Mammary epithelial cell (primary cell): ENCODE measurements at regions of chr17 and their contacts with region 1.

Region 1: GRCh38 chr17:21214015-21214776 is at the start of gene TMEM11:
- DNase-seq: peak; percentile 95
- H3K4me3 ChIP-seq: peak within 1 kb of the TSS; percentile 78 to 96 (median 93)
- H3K27ac ChIP-seq: peak within 1 kb of the TSS; percentile 86
- H3K4me1 ChIP-seq: peaks cover 33% of the 10 kb centered on the region
- H3K27me3 ChIP-seq: no peaks in the 10 kb centered on the region
- CTCF ChIP-seq: peak in 1 of 2 donors; percentile 18
- total RNA-seq, gene TMEM11: 17.2 to 35.7 TPM

Region 2: GRCh38 chr17:21126645-21127510 is 87.3 kb before region 1 on chr17 and contains the start of gene DHRS7B:
- CTCF ChIA-PET with region 1: no interaction called
- dilution Hi-C with region 1: loop called (anchors 5 kb)
- in situ Hi-C with region 1: no loop called
- intact Hi-C with region 1: loop called (anchors 2 kb)
- DNase-seq: peak; percentile 95
- H3K4me3 ChIP-seq: peak within 1 kb of the TSS; percentile 63 to 97 (median 71)
- H3K27ac ChIP-seq: peak within 1 kb of the TSS; percentile 71
- H3K4me1 ChIP-seq: peaks cover 12% of the 10 kb centered on the region
- H3K27me3 ChIP-seq: no peaks in the 10 kb centered on the region
- CTCF ChIP-seq: peak in 1 of 2 donors; percentile 14
- total RNA-seq, gene DHRS7B: 27.3 to 29.5 TPM

Region 3: GRCh38 chr17:21132428-21132827 is 81.8 kb before region 1 on chr17:
- CTCF ChIA-PET with region 1: no interaction called
- dilution Hi-C with region 1: loop called (anchors 5 kb)
- in situ Hi-C with region 1: no loop called
- intact Hi-C with region 1: loop called (anchors 2 kb)
- DNase-seq: no peak
- H3K4me3 ChIP-seq: no peak overlapping the region
- H3K27ac ChIP-seq: no peak overlapping the region
- H3K4me1 ChIP-seq: peaks cover 9% of the 10 kb centered on the region
- H3K27me3 ChIP-seq: no peaks in the 10 kb centered on the region
- CTCF ChIP-seq: no peak

Region 4: GRCh38 chr17:21171309-21171922 is 42.8 kb before region 1 on chr17:
- CTCF ChIA-PET with region 1: no interaction called
- dilution Hi-C with region 1: no loop called
- in situ Hi-C with region 1: no loop called
- intact Hi-C with region 1: no loop called
- DNase-seq: no peak
- H3K4me3 ChIP-seq: no peak overlapping the region
- H3K27ac ChIP-seq: no peak overlapping the region
- H3K4me1 ChIP-seq: peaks cover 6% of the 10 kb centered on the region
- H3K27me3 ChIP-seq: no peaks in the 10 kb centered on the region
- CTCF ChIP-seq: no peak

Region 5: DNA sequence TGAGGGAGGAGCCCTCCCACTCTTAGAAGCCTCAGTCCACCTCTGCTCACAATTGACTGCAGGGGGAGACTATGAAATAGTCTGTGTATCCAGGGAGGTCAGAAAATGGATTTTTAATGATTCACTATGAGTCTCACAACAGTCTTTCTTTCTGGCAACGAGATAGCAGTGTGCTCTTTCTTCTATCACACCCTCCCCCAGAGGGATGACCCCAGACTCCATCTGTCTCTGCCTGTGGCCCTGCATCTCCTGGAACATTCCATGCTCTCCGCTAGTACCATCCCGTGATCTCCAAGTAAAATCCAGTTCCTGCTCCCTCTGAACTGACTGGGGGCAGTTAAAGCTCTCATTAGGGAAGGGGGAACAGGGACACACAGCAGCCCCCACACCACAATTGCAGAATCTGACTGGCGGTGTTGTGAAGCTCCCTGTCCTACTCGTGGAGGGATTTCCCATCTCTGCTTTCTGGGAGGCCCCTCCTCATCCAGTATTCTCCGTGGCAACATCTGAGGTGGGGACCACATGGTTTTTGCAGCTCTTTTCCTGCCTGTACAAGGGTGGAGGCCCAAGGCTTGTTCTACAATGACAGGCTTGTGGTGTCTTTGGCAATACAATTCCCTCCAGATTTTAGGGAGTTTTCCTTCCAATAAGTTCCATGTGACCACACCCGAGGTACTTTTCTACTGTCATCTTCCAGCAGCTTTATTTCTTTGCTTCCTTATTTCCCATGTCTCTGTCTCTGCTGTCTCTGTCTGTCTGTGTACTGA is 19.6 kb after region 1 on chr17:
- CTCF ChIA-PET with region 1: no interaction called
- dilution Hi-C with region 1: no loop called
- in situ Hi-C with region 1: no loop called
- intact Hi-C with region 1: no loop called
- DNase-seq: no peak
- H3K4me3 ChIP-seq: no peak overlapping the region
- H3K27ac ChIP-seq: no peak overlapping the region
- H3K4me1 ChIP-seq: no peaks in the 10 kb centered on the region
- H3K27me3 ChIP-seq: no peaks in the 10 kb centered on the region
- CTCF ChIP-seq: no peak

Region 6: DNA sequence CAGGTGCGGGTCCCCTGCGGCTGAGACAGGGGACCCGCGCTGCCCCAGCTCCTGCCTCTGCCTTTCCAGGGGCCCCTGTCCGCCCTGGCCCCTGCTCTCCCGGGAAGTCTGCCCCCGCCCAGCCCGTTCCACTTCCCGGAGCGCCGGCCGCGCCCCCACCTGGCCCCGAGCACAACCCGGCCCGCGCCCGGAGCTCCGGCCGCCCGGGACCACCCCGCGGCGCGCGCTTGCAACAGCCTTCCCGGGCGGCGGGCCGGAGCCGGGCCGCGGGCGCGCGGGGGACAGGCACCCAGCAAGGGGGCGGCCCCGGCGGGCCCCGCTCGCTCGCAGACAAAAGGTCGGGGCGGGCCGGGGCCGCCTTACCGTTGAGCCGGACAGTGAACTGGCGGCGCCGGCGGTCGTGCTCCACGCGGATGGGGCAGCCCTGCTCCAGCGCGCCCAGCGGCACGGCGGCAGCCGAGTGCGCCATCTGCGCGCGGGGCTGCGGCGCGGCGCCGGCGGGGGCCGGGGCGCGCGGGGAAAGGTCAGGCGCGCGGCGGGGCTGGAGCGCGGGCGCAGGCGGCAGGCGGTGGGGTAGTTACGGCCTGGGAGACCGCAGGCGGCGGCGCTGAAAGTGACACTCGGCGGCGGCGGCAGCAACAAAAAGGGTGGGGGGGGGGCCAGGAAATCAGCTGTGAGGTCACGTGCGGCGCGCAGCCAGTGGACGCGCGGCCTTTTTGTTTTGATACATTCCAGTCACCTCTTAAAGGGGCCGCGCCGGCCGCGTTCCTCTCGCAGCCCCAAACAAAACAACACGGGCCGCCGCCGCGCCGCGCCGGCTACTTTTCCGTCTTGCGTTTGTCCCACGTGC is 38.8 kb after region 1 on chr17 and contains the start of gene NATD1:
- CTCF ChIA-PET with region 1: no interaction called
- dilution Hi-C with region 1: no loop called
- in situ Hi-C with region 1: no loop called
- intact Hi-C with region 1: loop called (anchors 1 kb)
- DNase-seq: peak; percentile 73
- H3K4me3 ChIP-seq: peak within 1 kb of the TSS; percentile 53 to 62 (median 56)
- H3K27ac ChIP-seq: peak within 1 kb of the TSS; percentile 30
- H3K4me1 ChIP-seq: peaks cover 26% of the 10 kb centered on the region
- H3K27me3 ChIP-seq: no peaks in the 10 kb centered on the region
- CTCF ChIP-seq: no peak
- total RNA-seq, gene NATD1: 6.1 to 10.8 TPM

Region 7: DNA sequence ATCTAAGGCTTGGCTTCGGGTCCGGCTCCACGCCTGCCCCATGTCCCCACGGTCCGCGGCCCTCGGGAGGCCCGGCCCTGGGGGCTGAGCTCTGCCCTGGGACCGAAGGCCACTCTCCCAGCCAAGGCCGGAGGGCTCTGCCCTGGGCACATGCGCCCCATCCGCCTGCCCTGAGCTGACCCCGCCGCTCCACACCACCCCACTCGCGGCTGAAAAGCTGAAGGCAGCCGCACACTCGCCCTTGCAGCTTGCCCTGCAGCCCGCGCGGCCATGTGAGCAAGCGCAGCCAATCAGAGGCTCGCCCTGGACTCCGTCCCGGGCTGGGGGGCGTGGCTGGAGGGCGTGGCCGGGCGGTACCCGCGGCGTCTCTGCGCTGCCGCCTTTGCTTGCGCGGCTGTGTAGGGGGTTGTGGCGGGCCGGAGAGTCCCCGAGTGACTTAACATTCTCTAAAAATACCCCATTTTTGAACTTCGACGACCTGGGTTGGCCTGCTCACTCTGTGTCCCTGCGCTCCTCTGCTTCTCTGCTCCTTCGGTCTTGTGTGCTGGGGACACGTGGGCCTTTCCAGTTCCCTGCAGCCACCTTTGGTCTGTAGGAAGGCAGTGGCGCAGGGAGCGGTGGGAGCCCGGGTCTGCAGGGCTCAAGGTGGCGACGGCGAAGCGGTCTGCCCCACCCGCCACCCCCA is 61.5 kb after region 1 on chr17:
- CTCF ChIA-PET with region 1: no interaction called
- dilution Hi-C with region 1: loop called (anchors 5 kb)
- in situ Hi-C with region 1: no loop called
- intact Hi-C with region 1: no loop called
- DNase-seq: peak; percentile 70
- H3K4me3 ChIP-seq: peak overlapping the region; percentile 58 to 66 (median 62)
- H3K27ac ChIP-seq: no peak overlapping the region
- H3K4me1 ChIP-seq: peaks cover 15% of the 10 kb centered on the region
- H3K27me3 ChIP-seq: no peaks in the 10 kb centered on the region
- CTCF ChIP-seq: no peak

Region 8: DNA sequence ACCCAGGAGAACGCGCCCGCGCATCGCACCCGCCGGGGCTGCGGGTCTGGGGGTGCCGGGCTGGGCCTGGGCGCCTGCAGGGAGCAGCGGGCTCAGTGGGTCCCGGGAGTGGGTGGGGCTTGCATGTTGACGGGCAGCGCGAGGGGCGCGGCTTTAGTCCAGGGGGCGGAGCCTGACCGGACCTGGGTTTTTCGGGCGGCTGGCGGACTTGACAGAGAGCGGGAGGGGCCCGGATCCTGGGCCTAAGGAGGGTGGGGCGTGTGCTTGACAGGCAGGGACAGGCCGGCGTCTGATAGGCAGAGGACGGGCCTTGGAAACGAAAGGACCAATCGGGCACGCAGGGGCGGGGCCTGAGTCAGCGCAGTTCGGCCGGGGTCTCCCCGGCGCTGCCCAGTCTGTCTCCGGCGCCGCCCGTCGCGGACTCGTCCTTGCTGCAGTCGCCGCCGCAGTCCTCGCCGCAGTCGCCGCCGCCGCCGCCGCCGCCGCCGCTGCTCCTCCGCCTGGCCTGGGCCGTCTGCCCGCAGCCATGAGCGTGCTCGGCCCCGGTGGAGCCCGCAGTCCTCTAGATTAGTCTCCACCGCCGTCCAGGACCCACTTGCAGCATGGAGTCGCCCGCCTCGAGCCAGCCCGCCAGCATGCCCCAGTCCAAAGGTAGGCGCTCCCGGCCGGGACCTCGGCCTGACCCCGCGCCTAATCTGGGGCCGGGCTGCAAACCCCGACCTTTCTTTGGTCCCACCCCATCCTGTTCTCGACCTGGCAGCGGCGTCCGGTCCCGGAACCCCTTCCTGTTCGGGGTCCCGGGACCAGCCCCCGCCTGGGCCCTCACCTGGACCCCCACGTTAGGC is 70.3 kb after region 1 on chr17 and contains the start of gene MAP2K3:
- CTCF ChIA-PET with region 1: no interaction called
- dilution Hi-C with region 1: loop called (anchors 5 kb)
- in situ Hi-C with region 1: no loop called
- intact Hi-C with region 1: loop called (anchors 2 kb)
- DNase-seq: peak; percentile 97
- H3K4me3 ChIP-seq: peak within 1 kb of the TSS; percentile 71 to 87 (median 76)
- H3K27ac ChIP-seq: peak within 1 kb of the TSS; percentile 97
- H3K4me1 ChIP-seq: peaks cover 45% of the 10 kb centered on the region
- H3K27me3 ChIP-seq: no peaks in the 10 kb centered on the region
- CTCF ChIP-seq: no peak
- total RNA-seq, gene MAP2K3: 14.2 to 57.6 TPM

Region 9: DNA sequence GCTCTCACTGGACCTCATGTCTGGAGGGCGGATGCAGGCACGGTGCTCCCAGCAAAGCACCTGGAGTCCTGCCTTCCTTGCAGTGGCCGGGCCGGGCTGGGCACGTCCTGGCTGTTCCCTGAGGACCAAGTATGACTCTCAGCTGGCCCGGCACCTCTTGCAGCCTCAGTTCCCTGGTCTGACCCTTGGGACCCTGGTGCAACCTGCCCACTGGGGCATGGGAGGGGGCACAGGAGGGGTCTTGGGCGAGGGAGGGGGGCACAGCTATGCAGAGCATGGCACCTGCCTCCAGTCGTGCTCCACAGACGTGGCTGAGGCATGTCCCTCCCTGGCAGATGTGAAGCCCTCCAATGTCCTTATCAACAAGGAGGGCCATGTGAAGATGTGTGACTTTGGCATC is 89.9 kb after region 1 on chr17:
- CTCF ChIA-PET with region 1: no interaction called
- dilution Hi-C with region 1: no loop called
- in situ Hi-C with region 1: no loop called
- intact Hi-C with region 1: no loop called
- DNase-seq: no peak
- H3K4me3 ChIP-seq: no peak overlapping the region
- H3K27ac ChIP-seq: no peak overlapping the region
- H3K4me1 ChIP-seq: no peaks in the 10 kb centered on the region
- H3K27me3 ChIP-seq: no peaks in the 10 kb centered on the region
- CTCF ChIP-seq: no peak